Adrenal gland (tissue), 19 donors: ENCODE measurements at regions of chr20 and their contacts with region 1.

Region 1: DNA sequence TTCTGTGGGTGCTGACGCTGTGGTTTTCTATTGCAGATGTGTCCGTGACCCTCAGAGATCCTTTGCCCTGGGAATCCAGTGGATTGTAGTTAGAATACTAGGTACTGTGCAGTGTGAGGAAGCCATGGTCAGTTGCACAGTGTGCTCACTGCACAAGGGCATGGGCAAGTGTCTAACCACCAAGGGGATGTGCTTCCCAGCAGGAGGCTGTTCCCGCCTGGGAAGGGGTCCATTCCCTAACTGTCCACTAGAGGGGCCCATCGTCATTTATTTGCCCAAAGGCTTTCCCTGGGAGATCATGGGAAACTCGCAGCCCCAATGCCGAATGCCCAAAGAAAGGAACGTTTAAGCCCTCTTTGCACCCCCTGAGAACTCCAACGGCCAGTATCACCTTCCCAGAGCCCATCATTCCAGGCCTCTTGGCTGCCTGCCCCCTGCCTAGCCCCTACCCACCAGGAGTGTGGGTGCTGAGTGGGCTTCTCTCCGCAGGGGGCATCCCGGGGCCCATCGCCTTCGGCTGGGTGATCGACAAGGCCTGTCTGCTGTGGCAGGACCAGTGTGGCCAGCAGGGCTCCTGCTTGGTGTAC is 26.2 kb downstream of the SLCO4A1 start:
- DNase-seq: peak; percentile 76 to 90 (median 82)
- H3K4me3 ChIP-seq: no peak overlapping the region
- H3K27ac ChIP-seq: no peak overlapping the region
- H3K4me1 ChIP-seq: no peaks in the 10 kb centered on the region
- H3K27me3 ChIP-seq: no peaks in the 10 kb centered on the region
- CTCF ChIP-seq: peak; percentile 70 to 95 (median 90)
- POLR2A ChIP-seq: no peak

Region 2: GRCh38 chr20:62561182-62561581 is 107.4 kb before region 1 on chr20:
- intact Hi-C with region 1: no loop called
- DNase-seq: no peak
- H3K4me3 ChIP-seq: no peak overlapping the region
- H3K27ac ChIP-seq: no peak overlapping the region
- H3K4me1 ChIP-seq: no peaks in the 10 kb centered on the region
- H3K27me3 ChIP-seq: peaks cover 42% of the 10 kb centered on the region
- CTCF ChIP-seq: no peak
- POLR2A ChIP-seq: no peak

Region 3: GRCh38 chr20:62603021-62603906 is 65.3 kb before region 1 on chr20:
- intact Hi-C with region 1: no loop called
- DNase-seq: peak in 6 of 7 donors; percentile 73 to 80 (median 79)
- H3K4me3 ChIP-seq: no peak overlapping the region
- H3K27ac ChIP-seq: peak overlapping the region in 2 of 5 donors; percentile 56 to 75
- H3K4me1 ChIP-seq: peaks cover 0 to 13% of the 10 kb centered on the region in 2 donors
- H3K27me3 ChIP-seq: peaks cover 13% of the 10 kb centered on the region
- CTCF ChIP-seq: no peak
- POLR2A ChIP-seq: no peak

Region 4: DNA sequence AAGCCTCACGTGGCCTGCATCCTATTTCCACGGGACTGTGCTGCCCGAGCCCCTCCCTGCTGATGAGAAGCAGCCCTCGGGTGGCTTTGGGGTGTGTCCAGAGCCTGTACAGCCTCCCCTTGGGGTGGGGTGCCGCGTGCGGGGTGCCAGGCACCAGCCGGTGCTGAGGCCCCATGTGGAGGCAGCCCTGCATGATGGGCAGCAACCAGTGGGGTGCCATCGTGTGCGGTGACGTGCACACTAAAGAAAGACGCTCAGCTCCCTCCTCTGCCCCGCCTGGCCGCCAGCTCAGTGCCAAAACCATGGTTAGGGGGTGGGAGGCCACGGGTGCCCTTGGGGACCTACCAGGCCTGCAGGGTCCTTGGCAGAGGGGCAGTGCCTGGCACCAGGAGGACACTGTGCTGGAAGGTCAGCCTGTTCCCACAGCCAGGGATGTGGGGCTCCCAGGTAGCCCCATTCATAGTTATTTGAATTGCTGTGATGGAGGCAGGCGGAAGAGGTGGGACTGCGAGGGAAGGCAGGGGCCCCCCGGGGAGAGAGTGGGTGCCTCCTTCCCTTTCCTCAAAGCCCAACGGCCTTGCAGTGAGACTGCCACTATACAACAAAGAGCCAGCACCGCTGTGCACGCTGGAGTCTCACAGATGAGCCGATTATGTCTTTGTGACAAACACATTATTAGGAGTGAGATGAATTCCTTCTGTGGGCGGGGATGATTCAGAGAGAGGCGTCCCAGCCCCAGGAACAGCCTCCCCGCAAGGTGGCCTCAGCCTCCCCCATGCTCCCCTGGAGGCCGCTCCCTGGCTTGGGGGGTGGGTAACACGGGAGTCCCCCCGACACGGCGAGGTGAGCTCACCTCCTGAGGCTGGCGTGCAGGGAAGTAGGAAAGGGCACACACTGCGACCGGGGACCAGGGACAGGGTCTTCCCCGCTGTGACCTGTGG is 66.6 kb after region 1 on chr20:
- intact Hi-C with region 1: no loop called
- DNase-seq: peak in 2 of 7 donors; percentile 3 to 4
- H3K4me3 ChIP-seq: no peak overlapping the region
- H3K27ac ChIP-seq: no peak overlapping the region
- H3K4me1 ChIP-seq: no peaks in the 10 kb centered on the region
- H3K27me3 ChIP-seq: peaks cover 27% of the 10 kb centered on the region
- CTCF ChIP-seq: no peak
- POLR2A ChIP-seq: no peak

Region 5: GRCh38 chr20:62752671-62753501 is 84.4 kb after region 1 on chr20:
- intact Hi-C with region 1: no loop called
- DNase-seq: no peak
- H3K4me3 ChIP-seq: no peak overlapping the region
- H3K27ac ChIP-seq: no peak overlapping the region
- H3K4me1 ChIP-seq: no peaks in the 10 kb centered on the region
- H3K27me3 ChIP-seq: no peaks in the 10 kb centered on the region
- CTCF ChIP-seq: no peak
- POLR2A ChIP-seq: no peak

Region 6: GRCh38 chr20:62786157-62786556 is 117.6 kb after region 1 on chr20:
- intact Hi-C with region 1: loop called (anchors 5 kb)
- DNase-seq: no peak
- H3K4me3 ChIP-seq: no peak overlapping the region
- H3K27ac ChIP-seq: no peak overlapping the region
- H3K4me1 ChIP-seq: no peaks in the 10 kb centered on the region
- H3K27me3 ChIP-seq: peaks cover 4% of the 10 kb centered on the region
- CTCF ChIP-seq: no peak
- POLR2A ChIP-seq: no peak

Region 7: GRCh38 chr20:62808211-62808865 is 139.8 kb after region 1 on chr20:
- intact Hi-C with region 1: loop called in 1 of 2 experiments (anchors 5 kb)
- DNase-seq: peak in 6 of 7 donors; percentile 62 to 85 (median 69)
- H3K4me3 ChIP-seq: no peak overlapping the region
- H3K27ac ChIP-seq: no peak overlapping the region
- H3K4me1 ChIP-seq: peaks cover 12 to 17% of the 10 kb centered on the region in 2 donors
- H3K27me3 ChIP-seq: no peaks in the 10 kb centered on the region
- CTCF ChIP-seq: peak; percentile 67 to 96 (median 83)
- POLR2A ChIP-seq: no peak